Activated CD4-positive, alpha-beta T cell treated with anti-CD3 and anti-CD28 coated beads for 36 hours (primary cell): ENCODE measurements at regions of chr2 and their contacts with region 1.

Region 1: GRCh38 chr2:85066874-85067351 is 66.3 kb upstream of the TCF7L1 start:
- DNase-seq: peak; percentile 76
- ATAC-seq: peak; percentile 55
- H3K4me3 Mint-ChIP-seq: no peak overlapping the region
- H3K27ac Mint-ChIP-seq: no peak overlapping the region
- H3K4me1 Mint-ChIP-seq: peaks cover 6% of the 10 kb centered on the region
- H3K27me3 Mint-ChIP-seq: peaks cover 9% of the 10 kb centered on the region

Region 2: DNA sequence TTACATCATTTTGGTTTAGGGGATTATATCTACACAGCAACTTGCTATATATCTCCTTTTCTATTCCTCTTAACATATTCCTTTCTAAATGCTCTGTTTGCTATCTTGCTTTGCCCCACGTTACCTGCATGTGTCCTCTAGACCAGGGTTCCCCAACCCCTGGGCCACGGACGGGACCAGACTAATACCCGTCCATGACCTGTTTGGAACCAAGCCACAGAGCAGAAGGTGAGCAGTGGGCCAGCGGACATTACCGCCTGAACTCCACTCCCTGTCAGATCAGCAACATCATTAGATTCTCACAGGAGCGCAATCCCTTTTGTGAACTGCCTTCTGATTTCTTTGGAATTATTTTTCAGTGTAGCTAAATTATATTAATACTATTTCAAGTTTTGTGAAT is 29.3 kb before region 1 on chr2:
- CTCF ChIA-PET with region 1: interaction called, 11 read pairs
- POLR2A ChIA-PET with region 1: no interaction called
- intact Hi-C with region 1: no loop called
- DNase-seq: no peak
- ATAC-seq: no peak
- H3K4me3 Mint-ChIP-seq: no peak overlapping the region
- H3K27ac Mint-ChIP-seq: no peak overlapping the region
- H3K4me1 Mint-ChIP-seq: peaks cover 2% of the 10 kb centered on the region
- H3K27me3 Mint-ChIP-seq: no peaks in the 10 kb centered on the region

Region 3: DNA sequence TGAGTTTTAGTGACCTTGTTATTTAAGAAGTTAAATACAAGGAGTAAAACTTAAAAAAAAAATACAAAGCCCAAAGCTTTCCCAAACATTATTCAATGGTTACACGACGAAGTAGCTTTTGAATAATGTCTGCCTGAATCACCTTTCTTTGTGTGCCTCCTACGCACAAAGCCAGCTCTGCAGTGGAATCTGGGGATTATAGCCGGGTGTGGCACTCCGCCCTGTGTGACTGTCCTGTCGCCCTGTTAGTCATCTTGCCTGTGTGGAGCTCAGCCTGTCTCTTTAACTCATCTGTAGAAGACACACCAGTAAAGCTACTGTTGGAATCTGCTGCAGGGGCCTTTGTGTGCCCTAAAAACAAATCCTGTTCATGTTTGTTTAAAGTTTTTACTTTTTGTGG is 13.1 kb before region 1 on chr2:
- CTCF ChIA-PET with region 1: interaction called, 10 read pairs
- POLR2A ChIA-PET with region 1: no interaction called
- intact Hi-C with region 1: no loop called
- DNase-seq: peak; percentile 41
- ATAC-seq: peak; percentile 73
- H3K4me3 Mint-ChIP-seq: no peak overlapping the region
- H3K27ac Mint-ChIP-seq: no peak overlapping the region
- H3K4me1 Mint-ChIP-seq: peaks cover 37% of the 10 kb centered on the region
- H3K27me3 Mint-ChIP-seq: no peaks in the 10 kb centered on the region

Region 4: DNA sequence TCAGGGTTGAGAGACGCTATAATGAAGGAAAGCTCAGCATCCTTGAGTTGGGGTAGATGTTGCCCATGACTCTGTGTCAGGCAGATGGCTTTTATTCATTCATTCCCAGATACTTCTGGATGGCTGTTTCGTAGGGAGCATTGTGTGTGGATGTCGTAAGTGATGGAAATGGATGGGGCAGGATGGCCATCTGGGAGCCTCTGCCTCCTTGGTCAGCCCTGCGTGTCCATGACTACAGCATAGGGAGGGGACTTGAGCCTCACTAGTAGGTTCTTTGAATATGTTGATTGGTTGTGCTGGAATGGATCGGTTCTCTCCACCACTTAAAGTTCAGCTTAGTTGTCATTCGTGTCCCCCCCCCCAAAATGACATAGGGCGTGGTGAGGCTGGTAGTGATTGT is 216.0 kb after region 1 on chr2:
- CTCF ChIA-PET with region 1: interaction called, 6 read pairs
- POLR2A ChIA-PET with region 1: no interaction called
- intact Hi-C with region 1: loop called (anchors 1 to 2 kb)
- DNase-seq: no peak
- ATAC-seq: no peak
- H3K4me3 Mint-ChIP-seq: no peak overlapping the region
- H3K27ac Mint-ChIP-seq: no peak overlapping the region
- H3K4me1 Mint-ChIP-seq: peaks cover 9% of the 10 kb centered on the region
- H3K27me3 Mint-ChIP-seq: no peaks in the 10 kb centered on the region

Region 5: DNA sequence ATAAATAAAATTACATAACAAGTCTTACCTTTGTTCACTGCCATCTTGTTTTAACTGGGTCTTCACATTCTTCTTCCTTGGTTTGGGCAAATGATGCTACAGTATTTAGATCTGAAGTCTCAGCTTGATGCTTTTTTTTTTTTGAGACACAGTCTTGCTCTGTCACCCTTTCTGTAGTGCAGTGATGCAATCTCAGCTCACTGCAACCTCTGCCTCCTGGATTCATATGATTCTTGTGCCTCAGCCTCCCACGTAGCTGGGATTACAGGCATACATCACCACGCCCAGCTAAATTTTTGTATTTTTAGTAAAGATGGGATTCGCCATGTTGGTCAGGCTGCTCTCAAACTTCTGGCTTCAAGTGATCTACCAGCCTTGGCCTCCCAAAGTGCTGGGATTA is 418.9 kb after region 1 on chr2:
- CTCF ChIA-PET with region 1: no interaction called
- POLR2A ChIA-PET with region 1: no interaction called
- intact Hi-C with region 1: no loop called
- DNase-seq: no peak
- ATAC-seq: no peak
- H3K4me3 Mint-ChIP-seq: no peak overlapping the region
- H3K27ac Mint-ChIP-seq: no peak overlapping the region
- H3K4me1 Mint-ChIP-seq: no peaks in the 10 kb centered on the region
- H3K27me3 Mint-ChIP-seq: no peaks in the 10 kb centered on the region